ENCODE measurements at regions of chr5 and their contacts with region 1.

Region 1: GRCh38 chr5:73792687-73793320 is 166.8 kb downstream of the ARHGEF28 start:
- DNase-seq: peak; percentile 75
- ATAC-seq: peak; percentile 63
- H3K4me3 Mint-ChIP-seq: no peak overlapping the region
- H3K27ac Mint-ChIP-seq: no peak overlapping the region
- H3K4me1 Mint-ChIP-seq: no peaks in the 10 kb centered on the region
- H3K27me3 Mint-ChIP-seq: peaks cover 14% of the 10 kb centered on the region

Region 2: DNA sequence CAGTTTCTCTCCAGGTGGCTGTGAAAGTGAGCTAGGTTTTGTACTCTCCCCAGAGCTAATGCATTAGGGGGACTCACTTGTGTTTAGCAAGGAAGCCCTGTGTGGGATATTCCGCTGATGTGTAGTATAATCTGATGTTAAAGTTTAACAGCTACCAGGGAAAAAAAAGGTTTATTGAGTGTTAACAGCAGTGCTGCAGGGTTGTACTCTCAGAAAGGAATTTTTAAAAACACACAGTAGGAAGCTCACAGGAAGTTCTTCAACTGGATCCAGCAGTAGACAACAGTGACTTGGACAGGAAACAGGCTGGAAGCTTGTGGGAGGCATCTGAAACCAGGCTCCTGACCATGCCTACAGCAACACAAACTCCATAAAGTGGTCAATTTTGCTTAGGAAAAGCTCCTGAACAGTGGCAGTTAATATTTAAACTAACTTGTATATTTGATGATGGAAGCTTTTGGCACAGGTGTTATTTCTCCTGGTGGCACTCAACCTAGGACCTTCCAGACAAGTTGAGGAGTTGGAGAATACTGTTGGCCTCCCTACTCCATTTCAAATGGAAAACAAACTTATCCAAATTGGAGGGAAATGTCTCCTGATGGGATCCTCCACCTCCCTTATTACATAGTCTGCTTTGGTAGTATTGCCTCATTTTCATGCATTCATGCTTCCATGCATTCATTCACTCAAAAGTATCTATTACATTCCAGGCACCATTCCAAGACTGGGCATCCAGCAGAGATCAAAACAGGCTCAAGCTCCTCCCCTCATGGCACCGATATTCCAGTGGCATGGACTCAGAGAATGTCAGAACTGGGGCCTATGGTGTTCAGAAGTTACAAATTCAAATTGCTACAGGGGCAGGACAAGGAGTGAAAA is 399.0 kb before region 1 on chr5:
- CTCF ChIA-PET with region 1: no interaction called
- POLR2A ChIA-PET with region 1: no interaction called
- DNase-seq: no peak
- ATAC-seq: no peak
- H3K4me3 Mint-ChIP-seq: no peak overlapping the region
- H3K27ac Mint-ChIP-seq: no peak overlapping the region
- H3K4me1 Mint-ChIP-seq: no peaks in the 10 kb centered on the region
- H3K27me3 Mint-ChIP-seq: peaks cover 41% of the 10 kb centered on the region

Region 3: DNA sequence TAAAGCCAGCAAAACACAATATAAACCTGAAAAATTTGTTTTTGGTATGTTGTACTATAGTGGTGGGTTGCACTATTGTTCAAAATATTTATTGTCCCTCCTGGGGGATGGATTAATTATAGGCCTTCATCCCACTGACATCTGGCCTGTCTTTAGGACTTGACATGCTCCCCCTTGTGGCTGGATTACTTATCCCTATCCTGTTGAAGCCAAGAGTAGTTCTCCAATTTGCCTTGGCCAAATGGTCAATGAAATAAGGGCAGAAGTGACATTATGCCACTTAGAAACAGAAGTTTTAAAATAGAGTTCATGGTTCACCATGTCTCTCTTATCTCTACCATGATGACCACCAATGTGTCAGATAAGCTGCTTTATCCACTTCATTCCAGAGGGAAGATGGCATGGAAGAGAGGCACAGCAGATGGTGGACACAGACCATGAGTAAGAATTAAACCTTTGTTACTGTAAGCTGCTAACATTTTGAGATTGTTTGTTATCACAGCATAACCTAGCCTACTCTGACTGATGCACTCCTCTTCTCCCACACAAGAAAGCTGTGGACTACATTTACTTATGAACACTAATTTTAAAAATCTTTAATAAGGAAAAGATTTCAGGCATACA is 196.0 kb before region 1 on chr5:
- CTCF ChIA-PET with region 1: interaction called, 138 read pairs
- POLR2A ChIA-PET with region 1: no interaction called
- DNase-seq: peak; percentile 30
- ATAC-seq: no peak
- H3K4me3 Mint-ChIP-seq: no peak overlapping the region
- H3K27ac Mint-ChIP-seq: no peak overlapping the region
- H3K4me1 Mint-ChIP-seq: no peaks in the 10 kb centered on the region
- H3K27me3 Mint-ChIP-seq: peaks cover 9% of the 10 kb centered on the region

Measured in activated CD8-positive, alpha-beta T cell treated with anti-CD3 and anti-CD28 coated beads, Interleukin-2, amount 10 ng/mL, durations not matched to agents 7 days and 5 days (primary cell).